CD4-positive, alpha-beta memory T cell (primary cell): ENCODE measurements at regions of chr16 and their contacts with region 1.

Region 1: DNA sequence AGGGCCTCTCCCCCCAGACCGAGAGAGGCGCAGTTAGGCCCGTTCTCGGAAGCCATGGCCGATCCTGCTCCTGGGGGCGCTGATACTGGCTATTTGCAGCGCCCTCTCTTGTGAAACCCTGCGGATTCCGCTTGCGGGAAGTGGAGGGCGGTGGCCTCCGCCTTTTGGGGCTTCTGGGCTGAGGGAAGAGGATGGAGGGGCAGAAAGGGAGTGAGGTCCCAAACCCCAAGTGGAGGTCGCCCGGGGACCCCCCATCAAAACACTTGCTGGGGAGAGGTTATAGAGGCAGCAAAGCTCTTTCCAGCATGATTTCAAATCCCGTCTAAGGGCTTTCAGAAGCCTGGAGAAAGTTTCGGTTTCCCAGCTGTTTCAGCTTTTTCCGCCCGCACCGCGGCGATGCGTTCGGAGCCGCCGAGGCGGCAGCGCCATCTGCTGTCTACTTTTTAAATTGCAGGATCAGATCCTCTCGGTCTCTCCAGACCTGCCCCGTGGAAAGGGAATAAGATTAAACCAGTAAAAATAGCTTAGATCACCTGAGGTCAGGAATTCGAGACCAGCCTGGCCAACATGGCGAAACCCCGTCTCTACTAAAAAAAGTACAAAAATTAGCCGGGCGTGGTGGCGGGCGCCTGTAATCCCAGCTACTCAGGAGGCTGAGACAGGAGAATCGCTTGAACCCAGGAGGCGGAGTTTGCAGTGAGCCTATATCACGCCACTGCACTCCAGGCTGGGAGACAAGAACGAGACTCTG is 15.8 kb downstream of the SNX20 start:
- DNase-seq: peak; percentile 76 to 84 (median 79)
- H3K4me3 ChIP-seq: peak overlapping the region; percentile 37 to 61
- H3K4me3 Mint-ChIP-seq: peak overlapping the region; percentile 75 to 86 (median 82)
- H3K27ac ChIP-seq: peak overlapping the region; percentile 41
- H3K27ac Mint-ChIP-seq: peak overlapping the region; percentile 73 to 95 (median 90)
- H3K4me1 ChIP-seq: peaks cover 40% of the 10 kb centered on the region
- H3K4me1 Mint-ChIP-seq: peaks cover 21 to 43% (median 32%) of the 10 kb centered on the region in 4 donors
- H3K27me3 ChIP-seq: no peaks in the 10 kb centered on the region
- H3K27me3 Mint-ChIP-seq: no peaks in the 10 kb centered on the region

Region 2: DNA sequence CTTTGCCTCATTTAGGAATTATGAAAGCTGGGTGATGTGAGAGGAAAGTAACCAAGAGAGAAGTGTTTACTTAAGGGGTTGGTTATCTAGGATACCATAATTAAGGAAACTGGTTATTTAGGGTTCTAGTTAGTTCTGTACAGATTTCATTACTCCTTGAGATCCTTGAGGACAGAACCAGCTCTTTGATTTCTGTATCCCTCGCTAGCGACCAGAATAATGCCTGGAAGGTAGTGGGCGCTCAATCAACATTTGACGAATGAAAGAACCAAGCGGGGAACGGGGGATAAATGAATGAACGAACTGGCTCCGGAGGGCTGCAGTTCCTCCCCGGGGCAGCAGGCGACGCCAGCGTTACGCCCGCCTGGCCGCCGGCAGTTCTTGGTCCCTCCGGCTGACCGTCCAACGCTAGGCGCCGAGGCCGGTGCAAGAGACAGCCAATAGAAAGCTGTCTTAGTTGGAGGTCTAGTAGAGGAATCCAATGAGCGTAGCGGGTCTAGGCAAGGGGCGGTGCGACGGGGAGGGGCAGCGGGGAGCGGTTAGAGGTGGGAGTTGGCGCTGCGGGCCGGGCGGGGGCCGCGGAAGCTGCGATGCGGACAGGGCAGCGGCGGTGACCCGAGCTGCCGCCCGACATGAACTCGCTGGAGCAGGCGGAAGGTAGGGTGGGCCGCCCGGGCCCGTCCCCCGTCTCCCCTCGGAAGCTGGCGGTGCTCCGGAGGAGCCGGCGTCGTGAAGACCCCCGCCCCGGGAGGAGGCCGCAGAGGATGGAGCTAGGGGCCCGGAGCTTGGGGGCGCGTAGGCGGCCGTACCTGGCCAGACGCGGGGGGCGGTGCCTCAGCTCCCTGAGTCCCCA is 640.4 kb before region 1 on chr16 and contains the start of gene CNEP1R1:
- CTCF ChIA-PET with region 1: interaction called, 63 read pairs
- POLR2A ChIA-PET with region 1: interaction called, 4 read pairs
- intact Hi-C with region 1: loop called (anchors 1 kb)
- DNase-seq: peak; percentile 93 to 97 (median 95)
- H3K4me3 ChIP-seq: peak within 1 kb of the TSS; percentile 76 to 85
- H3K4me3 Mint-ChIP-seq: peak within 1 kb of the TSS; percentile 94 to 99 (median 96)
- H3K27ac ChIP-seq: peak within 1 kb of the TSS; percentile 75
- H3K27ac Mint-ChIP-seq: peak within 1 kb of the TSS; percentile 91 to 99 (median 96)
- H3K4me1 ChIP-seq: peaks cover 34% of the 10 kb centered on the region
- H3K4me1 Mint-ChIP-seq: peaks cover 18 to 32% (median 24%) of the 10 kb centered on the region in 4 donors
- H3K27me3 ChIP-seq: no peaks in the 10 kb centered on the region
- H3K27me3 Mint-ChIP-seq: peaks cover 0 to 4% of the 10 kb centered on the region in 2 donors
- total RNA-seq, gene CNEP1R1: 34.2 to 40.8 TPM

Region 3: DNA sequence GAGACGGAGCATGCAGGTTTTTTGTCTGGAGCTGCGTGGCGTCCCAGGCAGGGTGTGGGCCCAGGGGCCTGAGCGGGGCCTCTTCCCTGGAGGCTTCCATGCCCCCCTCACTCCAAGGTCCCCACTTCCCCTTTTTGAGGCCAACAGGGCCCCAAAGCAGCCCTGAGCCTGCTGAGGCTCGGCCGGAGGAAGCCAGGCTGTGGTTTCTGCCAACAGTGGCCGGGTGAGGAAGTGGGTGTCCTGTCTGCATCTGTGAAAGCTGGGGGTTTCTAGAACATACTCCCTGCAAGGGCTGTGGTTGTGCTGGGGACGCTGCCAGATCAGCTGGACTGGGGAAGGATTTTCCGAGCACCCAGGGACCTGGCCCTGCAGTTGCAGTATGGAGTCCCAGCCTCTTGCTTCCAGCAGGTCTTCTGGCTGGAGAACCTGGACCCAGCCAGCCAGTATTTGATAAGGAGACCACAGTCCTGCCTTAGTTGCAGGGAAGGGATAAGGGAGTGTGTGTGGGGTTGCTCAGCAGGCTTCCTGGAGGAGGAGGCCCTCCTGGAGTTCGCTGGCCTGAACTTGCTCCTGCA is 383.3 kb before region 1 on chr16:
- CTCF ChIA-PET with region 1: interaction called, 13 read pairs
- POLR2A ChIA-PET with region 1: interaction called, 4 read pairs
- intact Hi-C with region 1: no loop called
- DNase-seq: peak; percentile 62 to 84 (median 67)
- H3K4me3 ChIP-seq: peak overlapping the region in 1 of 2 donors; percentile 21
- H3K4me3 Mint-ChIP-seq: peak overlapping the region; percentile 76 to 92 (median 82)
- H3K27ac ChIP-seq: peak overlapping the region; percentile 57
- H3K27ac Mint-ChIP-seq: peak overlapping the region; percentile 77 to 99 (median 91)
- H3K4me1 ChIP-seq: peaks cover 94% of the 10 kb centered on the region
- H3K4me1 Mint-ChIP-seq: peaks cover 59 to 94% (median 81%) of the 10 kb centered on the region in 4 donors
- H3K27me3 ChIP-seq: no peaks in the 10 kb centered on the region
- H3K27me3 Mint-ChIP-seq: no peaks in the 10 kb centered on the region

Region 4: GRCh38 chr16:50377001-50377400 is 288.3 kb before region 1 on chr16:
- CTCF ChIA-PET with region 1: interaction called, 16 read pairs
- POLR2A ChIA-PET with region 1: no interaction called
- intact Hi-C with region 1: no loop called
- DNase-seq: no peak
- H3K4me3 ChIP-seq: no peak overlapping the region
- H3K4me3 Mint-ChIP-seq: no peak overlapping the region
- H3K27ac ChIP-seq: no peak overlapping the region
- H3K27ac Mint-ChIP-seq: no peak overlapping the region
- H3K4me1 ChIP-seq: no peaks in the 10 kb centered on the region
- H3K4me1 Mint-ChIP-seq: peaks cover 0 to 4% (median 1%) of the 10 kb centered on the region in 4 donors
- H3K27me3 ChIP-seq: no peaks in the 10 kb centered on the region
- H3K27me3 Mint-ChIP-seq: peaks cover 4 to 7% of the 10 kb centered on the region in 2 donors

Region 5: DNA sequence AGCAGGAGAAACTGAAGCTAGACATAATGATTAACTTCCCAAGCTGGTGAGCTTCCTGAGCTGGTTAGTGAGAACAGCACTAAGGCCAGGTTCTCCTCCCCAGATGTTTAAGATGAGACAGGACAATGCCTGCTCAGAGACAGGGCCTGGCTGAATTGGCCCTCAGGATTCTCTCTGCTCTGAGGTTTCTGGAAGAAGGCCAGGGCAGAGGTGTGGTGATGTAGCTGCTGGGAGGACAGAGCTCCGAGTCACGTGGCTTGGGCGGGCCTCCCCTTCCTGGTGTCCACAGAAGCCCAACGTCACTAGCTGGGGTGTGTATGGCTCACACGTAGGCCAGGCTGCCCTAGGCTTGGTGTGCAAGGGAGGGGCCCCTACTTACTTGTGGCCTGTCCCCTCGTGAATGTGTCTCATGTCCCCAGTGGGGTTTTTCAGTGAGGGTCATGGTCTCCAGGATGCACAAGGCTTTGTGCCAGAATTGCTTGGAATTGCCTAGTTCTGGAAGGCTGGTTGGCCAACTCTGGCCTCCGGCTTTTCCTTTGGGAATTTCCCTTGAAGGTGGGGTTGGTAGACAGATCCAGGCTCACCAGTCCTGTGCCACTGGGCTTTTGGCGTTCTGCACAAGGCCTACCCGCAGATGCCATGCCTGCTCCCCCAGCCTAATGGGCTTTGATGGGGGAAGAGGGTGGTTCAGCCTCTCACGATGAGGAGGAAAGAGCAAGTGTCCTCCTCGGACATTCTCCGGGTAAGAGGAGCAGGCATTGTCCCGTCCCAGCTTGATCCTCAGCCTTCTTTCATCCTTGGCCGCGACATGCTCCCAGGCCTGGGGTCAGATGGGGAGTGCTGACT is 31.5 kb after region 1 on chr16:
- CTCF ChIA-PET with region 1: interaction called, 28 read pairs
- POLR2A ChIA-PET with region 1: interaction called, 17 read pairs
- intact Hi-C with region 1: no loop called
- DNase-seq: peak; percentile 67 to 90 (median 71)
- H3K4me3 ChIP-seq: peak overlapping the region; percentile 48 to 89
- H3K4me3 Mint-ChIP-seq: peak overlapping the region; percentile 87 to 96 (median 93)
- H3K27ac ChIP-seq: peak overlapping the region; percentile 88
- H3K27ac Mint-ChIP-seq: peak overlapping the region; percentile 85 to 99 (median 95)
- H3K4me1 ChIP-seq: peaks cover 79% of the 10 kb centered on the region
- H3K4me1 Mint-ChIP-seq: peaks cover 60 to 93% (median 81%) of the 10 kb centered on the region in 4 donors
- H3K27me3 ChIP-seq: no peaks in the 10 kb centered on the region
- H3K27me3 Mint-ChIP-seq: no peaks in the 10 kb centered on the region

Region 6: GRCh38 chr16:50756473-50756872 is 91.2 kb after region 1 on chr16:
- CTCF ChIA-PET with region 1: interaction called, 242 read pairs
- POLR2A ChIA-PET with region 1: interaction called, 478 read pairs
- intact Hi-C with region 1: no loop called
- DNase-seq: no peak
- H3K4me3 ChIP-seq: no peak overlapping the region
- H3K4me3 Mint-ChIP-seq: peak overlapping the region in 7 of 8 donors; percentile 26 to 76 (median 57)
- H3K27ac ChIP-seq: no peak overlapping the region
- H3K27ac Mint-ChIP-seq: peak overlapping the region in 5 of 7 donors; percentile 22 to 68 (median 63)
- H3K4me1 ChIP-seq: peaks cover 89% of the 10 kb centered on the region
- H3K4me1 Mint-ChIP-seq: peaks cover 63 to 92% (median 79%) of the 10 kb centered on the region in 4 donors
- H3K27me3 ChIP-seq: no peaks in the 10 kb centered on the region
- H3K27me3 Mint-ChIP-seq: no peaks in the 10 kb centered on the region

Region 7: DNA sequence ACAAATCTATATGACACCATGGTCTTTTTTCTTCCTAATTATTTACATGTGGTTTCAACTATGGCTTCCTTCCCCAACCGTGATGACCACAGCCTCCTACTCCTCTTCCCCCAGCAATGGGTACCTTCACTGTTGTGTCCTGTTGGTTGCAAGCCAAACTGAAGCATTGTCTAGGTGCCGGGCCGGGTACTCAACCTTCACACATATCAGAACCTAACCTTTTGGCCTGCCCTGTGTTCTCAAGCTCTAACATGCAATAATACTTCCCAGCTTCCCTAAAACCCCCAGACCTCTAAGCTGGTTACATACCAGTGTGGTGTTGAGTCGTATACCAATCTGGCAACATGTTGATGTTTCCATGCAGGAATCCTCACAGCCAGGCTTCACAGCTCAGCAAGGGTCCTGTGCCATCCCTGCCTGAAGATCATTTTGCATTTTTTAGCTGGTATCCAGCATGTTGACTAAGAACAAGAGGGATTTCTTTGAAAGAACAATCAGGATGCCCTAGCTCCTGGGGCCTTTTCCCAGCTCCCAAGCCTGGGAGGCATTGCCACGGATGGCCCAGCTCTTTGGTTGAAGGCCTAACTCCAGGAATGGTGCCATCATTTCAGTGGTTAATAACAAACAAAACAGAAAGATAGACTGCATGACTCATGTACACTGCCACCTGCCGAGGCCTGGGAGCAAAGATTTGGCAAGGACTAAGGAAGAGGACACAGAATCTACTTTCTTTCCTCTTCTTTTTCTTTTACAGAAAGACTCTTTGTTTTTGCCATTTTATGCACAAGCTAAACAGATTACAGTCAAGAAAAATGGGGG is 859.5 kb after region 1 on chr16:
- CTCF ChIA-PET with region 1: no interaction called
- POLR2A ChIA-PET with region 1: no interaction called
- intact Hi-C with region 1: no loop called
- DNase-seq: no peak
- H3K4me3 ChIP-seq: no peak overlapping the region
- H3K4me3 Mint-ChIP-seq: no peak overlapping the region
- H3K27ac ChIP-seq: no peak overlapping the region
- H3K27ac Mint-ChIP-seq: no peak overlapping the region
- H3K4me1 ChIP-seq: no peaks in the 10 kb centered on the region
- H3K4me1 Mint-ChIP-seq: no peaks in the 10 kb centered on the region
- H3K27me3 ChIP-seq: no peaks in the 10 kb centered on the region
- H3K27me3 Mint-ChIP-seq: no peaks in the 10 kb centered on the region